Thyroid gland (tissue), 4 donors: ENCODE measurements at regions of chr7 and their contacts with region 1.

Region 1: GRCh38 chr7:107579885-107580715 is at the start of gene BCAP29:
- DNase-seq: peak; percentile 79 to 82
- H3K4me3 ChIP-seq: peak within 1 kb of the TSS; percentile 70 to 100 (median 79)
- H3K27ac ChIP-seq: peak within 1 kb of the TSS; percentile 95 to 98 (median 97)
- H3K4me1 ChIP-seq: peaks cover 10 to 15% of the 10 kb centered on the region in 2 donors
- H3K27me3 ChIP-seq: no peaks in the 10 kb centered on the region
- CTCF ChIP-seq: peak in 3 of 6 experiments; percentile 26 to 42 (median 34)
- POLR2A ChIP-seq: peak; percentile 86 to 95
- total RNA-seq, gene BCAP29: 217 to 276 (median 221) TPM

Region 2: GRCh38 chr7:107427462-107427861 is 152.6 kb before region 1 on chr7:
- intact Hi-C with region 1: no loop called
- DNase-seq: peak; percentile 19 to 59
- H3K4me3 ChIP-seq: no peak overlapping the region
- H3K27ac ChIP-seq: no peak overlapping the region
- H3K4me1 ChIP-seq: no peaks in the 10 kb centered on the region
- H3K27me3 ChIP-seq: no peaks in the 10 kb centered on the region
- CTCF ChIP-seq: no peak
- POLR2A ChIP-seq: no peak

Region 3: GRCh38 chr7:107725151-107725740 is 145.1 kb after region 1 on chr7:
- intact Hi-C with region 1: loop called (anchors 10 kb)
- DNase-seq: peak; percentile 59 to 62
- H3K4me3 ChIP-seq: no peak overlapping the region
- H3K27ac ChIP-seq: no peak overlapping the region
- H3K4me1 ChIP-seq: peaks cover 10 to 29% of the 10 kb centered on the region in 2 donors
- H3K27me3 ChIP-seq: no peaks in the 10 kb centered on the region
- CTCF ChIP-seq: peak in 5 of 6 experiments; percentile 50 to 79 (median 66)
- POLR2A ChIP-seq: no peak